ENCODE measurements at regions of chr1 and their contacts with region 1.

Region 1: GRCh38 chr1:193183019-193183627 is 3.3 kb downstream of the B3GALT2 start:
- H3K4me3 Mint-ChIP-seq: no peak overlapping the region
- H3K27ac Mint-ChIP-seq: no peak overlapping the region
- H3K4me1 Mint-ChIP-seq: peaks cover 15% of the 10 kb centered on the region
- H3K27me3 Mint-ChIP-seq: no peaks in the 10 kb centered on the region

Region 2: GRCh38 chr1:193368302-193368701 is 185.2 kb after region 1 on chr1:
- intact Hi-C with region 1: loop called (anchors 10 kb)
- H3K4me3 Mint-ChIP-seq: peak overlapping the region; percentile 17
- H3K27ac Mint-ChIP-seq: peak overlapping the region; percentile 55
- H3K4me1 Mint-ChIP-seq: peaks cover 7% of the 10 kb centered on the region
- H3K27me3 Mint-ChIP-seq: no peaks in the 10 kb centered on the region